ENCODE measurements at regions of chr18 and their contacts with region 1.

Region 1: DNA sequence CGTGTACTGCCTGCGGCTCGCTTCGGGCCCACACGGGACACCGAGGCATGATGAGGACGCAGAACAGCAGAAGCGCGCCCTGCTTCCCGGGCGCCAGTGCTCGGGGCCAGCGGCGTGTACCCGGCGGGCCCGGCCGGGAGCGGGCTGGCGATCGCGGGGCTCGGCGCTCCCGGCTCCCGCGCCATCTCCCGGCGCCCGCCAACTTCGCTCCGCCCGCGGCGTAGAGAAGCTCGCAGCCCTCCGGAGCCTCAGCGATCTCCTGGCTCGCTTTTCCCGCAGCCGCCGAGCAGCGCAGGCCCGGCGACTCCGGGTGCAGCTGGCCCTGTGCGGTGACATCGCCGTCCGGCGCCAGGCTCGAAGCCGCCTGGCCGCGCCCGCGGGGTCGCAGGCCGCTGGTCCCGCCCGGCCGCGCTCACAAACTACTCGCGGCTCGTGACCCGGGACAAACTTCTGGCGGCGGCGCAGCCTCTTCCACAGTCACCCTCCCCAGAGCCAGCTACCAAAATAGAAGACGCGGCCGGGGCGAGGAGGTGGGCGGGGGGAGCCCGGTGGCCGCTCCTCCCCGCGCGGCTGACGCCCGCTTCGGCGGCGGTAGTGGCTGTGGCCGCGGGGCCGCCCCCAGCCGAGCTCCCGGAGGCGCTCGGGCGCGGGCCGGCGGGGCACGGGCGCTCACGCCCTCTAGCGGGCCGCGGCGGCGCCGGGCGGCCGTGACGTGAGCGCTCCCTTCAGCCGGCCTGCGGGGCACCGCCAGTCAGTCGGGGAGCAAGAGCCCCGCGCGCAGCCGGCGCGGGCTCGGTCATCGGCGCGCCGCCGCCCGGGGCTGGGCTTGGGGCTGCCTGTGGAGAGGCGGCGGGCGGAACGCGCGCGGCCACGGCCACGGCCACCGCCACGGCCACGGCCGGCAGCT is at the start of gene PTPRM:
- DNase-seq: peak; percentile 90
- H3K4me3 ChIP-seq: peak within 1 kb of the TSS; percentile 53 to 83 (median 60)
- H3K27ac ChIP-seq: peak within 1 kb of the TSS; percentile 85 to 97 (median 90)
- H3K4me1 ChIP-seq: peaks cover 7 to 45% (median 31%) of the 10 kb centered on the region in 6 donors
- H3K27me3 ChIP-seq: peaks cover 0 to 69% (median 24%) of the 10 kb centered on the region in 7 donors
- CTCF ChIP-seq: peak in 4 of 11 experiments; percentile 22 to 49 (median 41)
- POLR2A ChIP-seq: peak in 1 of 3 donors; percentile 57
- total RNA-seq, gene PTPRM: 44.2 to 97.8 (median 69.9) TPM

Region 2: GRCh38 chr18:7272311-7273049 is 294.3 kb before region 1 on chr18:
- intact Hi-C with region 1: loop called (anchors 5 kb)
- DNase-seq: no peak
- H3K4me3 ChIP-seq: peak overlapping the region in 1 of 8 donors; percentile 29
- H3K27ac ChIP-seq: peak overlapping the region; percentile 36 to 81 (median 64)
- H3K4me1 ChIP-seq: peaks cover 6 to 26% (median 22%) of the 10 kb centered on the region in 6 donors
- H3K27me3 ChIP-seq: no peaks in the 10 kb centered on the region
- CTCF ChIP-seq: peak in 9 of 11 experiments; percentile 4 to 62 (median 39)
- POLR2A ChIP-seq: no peak

Measured in spleen (tissue), 13 donors.